ENCODE measurements at regions of chr9 and their contacts with region 1.

Region 1: GRCh38 chr9:81394881-81395675 is 294.3 kb downstream of the TLE1 start:
- DNase-seq: no peak
- H3K4me3 ChIP-seq: no peak overlapping the region
- H3K27ac ChIP-seq: peak overlapping the region; percentile 52 to 75 (median 71)
- H3K4me1 ChIP-seq: peaks cover 0 to 40% (median 38%) of the 10 kb centered on the region in 4 donors
- H3K27me3 ChIP-seq: no peaks in the 10 kb centered on the region
- CTCF ChIP-seq: no peak
- EP300 ChIP-seq: no peak
- POLR2A ChIP-seq: no peak

Region 2: GRCh38 chr9:81492710-81493447 is 97.8 kb after region 1 on chr9:
- intact Hi-C with region 1: loop called (anchors 10 kb)
- DNase-seq: no peak
- H3K4me3 ChIP-seq: no peak overlapping the region
- H3K27ac ChIP-seq: no peak overlapping the region
- H3K4me1 ChIP-seq: peaks cover 0 to 11% (median 4%) of the 10 kb centered on the region in 4 donors
- H3K27me3 ChIP-seq: no peaks in the 10 kb centered on the region
- CTCF ChIP-seq: no peak
- EP300 ChIP-seq: no peak
- POLR2A ChIP-seq: no peak

Region 3: GRCh38 chr9:82295181-82295580 is 900.1 kb after region 1 on chr9:
- intact Hi-C with region 1: no loop called
- DNase-seq: no peak
- H3K4me3 ChIP-seq: no peak overlapping the region
- H3K27ac ChIP-seq: no peak overlapping the region
- H3K4me1 ChIP-seq: peaks cover 0 to 6% (median 0%) of the 10 kb centered on the region in 4 donors
- H3K27me3 ChIP-seq: no peaks in the 10 kb centered on the region
- CTCF ChIP-seq: no peak
- EP300 ChIP-seq: no peak
- POLR2A ChIP-seq: no peak

Measured in sigmoid colon (tissue), 7 donors.